ENCODE measurements at regions of chr21 and their contacts with region 1.

Region 1: DNA sequence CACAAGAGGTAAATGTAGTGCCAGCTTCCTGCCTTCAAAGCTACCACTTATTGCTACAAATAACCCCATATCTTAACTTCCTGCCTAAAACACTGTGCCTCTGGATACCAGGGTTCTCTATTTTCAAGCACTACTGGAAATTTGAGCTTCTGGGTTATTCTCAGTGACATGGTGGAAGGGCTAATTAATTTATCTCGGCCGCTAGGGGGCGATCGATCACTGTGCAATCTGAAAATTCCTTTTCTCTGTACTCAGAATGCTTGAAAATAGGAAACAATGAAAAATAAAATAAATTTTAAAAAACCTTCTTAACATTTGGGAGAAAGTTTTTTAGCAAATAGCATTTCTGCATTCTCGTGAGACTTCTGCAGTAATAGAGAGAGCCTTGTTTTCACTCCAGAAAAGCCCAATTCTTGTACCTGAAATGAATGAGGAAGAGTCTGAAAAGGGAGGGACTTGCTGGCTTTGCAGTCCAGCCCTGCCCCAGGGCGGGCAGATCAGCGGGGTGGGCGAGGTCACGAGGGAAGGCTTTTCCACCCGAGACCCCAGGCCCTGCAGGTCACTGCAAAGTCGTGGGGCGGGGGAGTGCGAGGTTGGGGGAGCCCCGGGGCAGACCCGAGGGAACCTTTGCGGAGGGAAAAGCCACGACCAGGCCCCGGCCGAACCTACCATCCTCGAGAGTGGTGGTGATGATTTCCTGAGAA is 276.7 kb downstream of the PCP4 start:
- DNase-seq: peak in 1 of 2 experiments; percentile 28
- H3K4me3 ChIP-seq: no peak overlapping the region
- H3K27ac ChIP-seq: no peak overlapping the region
- H3K4me1 ChIP-seq: no peaks in the 10 kb centered on the region
- H3K27me3 ChIP-seq: no peaks in the 10 kb centered on the region
- CTCF ChIP-seq: peak; percentile 83

Region 2: GRCh38 chr21:40313304-40313703 is 169.3 kb after region 1 on chr21:
- CTCF ChIA-PET with region 1: no interaction called
- POLR2A ChIA-PET with region 1: no interaction called
- intact Hi-C with region 1: no loop called
- DNase-seq: no peak
- H3K4me3 ChIP-seq: no peak overlapping the region
- H3K27ac ChIP-seq: no peak overlapping the region
- H3K4me1 ChIP-seq: no peaks in the 10 kb centered on the region
- H3K27me3 ChIP-seq: no peaks in the 10 kb centered on the region
- CTCF ChIP-seq: no peak

Region 3: DNA sequence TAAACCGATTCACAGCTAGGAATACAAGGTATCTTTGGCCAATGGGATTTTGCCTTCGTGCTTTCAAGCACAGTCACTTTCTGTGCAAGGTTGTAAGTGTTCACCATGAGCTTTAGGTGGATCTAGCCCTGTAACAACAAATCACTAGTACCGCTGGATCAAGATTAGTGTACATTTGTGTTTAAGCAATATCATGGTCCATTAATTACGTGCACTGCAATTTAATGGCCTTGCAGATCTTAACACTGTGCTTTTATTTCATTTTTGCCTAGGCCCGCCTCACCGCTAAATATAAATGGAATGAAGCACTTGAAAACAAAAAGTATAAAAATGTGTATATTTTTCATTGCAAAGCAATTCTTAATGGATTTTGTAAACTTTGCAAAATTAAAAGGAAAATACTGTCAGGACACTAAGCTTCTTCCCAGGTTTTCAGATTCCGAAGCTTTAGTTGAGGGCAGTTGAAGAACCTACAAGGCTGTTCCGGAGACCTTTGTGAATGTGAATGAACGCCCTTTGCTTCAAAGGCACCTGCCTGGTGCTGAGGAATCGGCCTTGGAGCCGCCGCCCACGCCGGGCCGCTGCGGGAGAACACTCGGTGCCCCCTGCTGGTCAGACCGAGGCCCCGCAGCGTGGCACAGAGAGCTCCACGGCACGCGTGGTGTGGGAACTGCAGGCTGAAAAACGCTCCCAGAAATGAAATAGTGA is 242.1 kb after region 1 on chr21:
- CTCF ChIA-PET with region 1: interaction called, 3 read pairs
- POLR2A ChIA-PET with region 1: interaction called, 3 read pairs
- intact Hi-C with region 1: loop called (anchors 5 kb)
- DNase-seq: peak in 1 of 2 experiments; percentile 1
- H3K4me3 ChIP-seq: no peak overlapping the region
- H3K27ac ChIP-seq: no peak overlapping the region
- H3K4me1 ChIP-seq: no peaks in the 10 kb centered on the region
- H3K27me3 ChIP-seq: 0 out of 2 replicates have a peak, but pooled peaks cover 6% of the 10 kb centered on the region
- CTCF ChIP-seq: peak; percentile 66

Region 4: GRCh38 chr21:41068967-41069642 is 925.1 kb after region 1 on chr21:
- CTCF ChIA-PET with region 1: interaction called, 4 read pairs
- POLR2A ChIA-PET with region 1: no interaction called
- intact Hi-C with region 1: loop called (anchors 10 kb)
- DNase-seq: peak in 1 of 2 experiments; percentile 45
- H3K4me3 ChIP-seq: no peak overlapping the region
- H3K27ac ChIP-seq: no peak overlapping the region
- H3K4me1 ChIP-seq: no peaks in the 10 kb centered on the region
- H3K27me3 ChIP-seq: peaks cover 77% of the 10 kb centered on the region
- CTCF ChIP-seq: peak; percentile 68